Thyroid gland (tissue), 4 donors: ENCODE measurements at regions of chr17 and their contacts with region 1.

Region 1: DNA sequence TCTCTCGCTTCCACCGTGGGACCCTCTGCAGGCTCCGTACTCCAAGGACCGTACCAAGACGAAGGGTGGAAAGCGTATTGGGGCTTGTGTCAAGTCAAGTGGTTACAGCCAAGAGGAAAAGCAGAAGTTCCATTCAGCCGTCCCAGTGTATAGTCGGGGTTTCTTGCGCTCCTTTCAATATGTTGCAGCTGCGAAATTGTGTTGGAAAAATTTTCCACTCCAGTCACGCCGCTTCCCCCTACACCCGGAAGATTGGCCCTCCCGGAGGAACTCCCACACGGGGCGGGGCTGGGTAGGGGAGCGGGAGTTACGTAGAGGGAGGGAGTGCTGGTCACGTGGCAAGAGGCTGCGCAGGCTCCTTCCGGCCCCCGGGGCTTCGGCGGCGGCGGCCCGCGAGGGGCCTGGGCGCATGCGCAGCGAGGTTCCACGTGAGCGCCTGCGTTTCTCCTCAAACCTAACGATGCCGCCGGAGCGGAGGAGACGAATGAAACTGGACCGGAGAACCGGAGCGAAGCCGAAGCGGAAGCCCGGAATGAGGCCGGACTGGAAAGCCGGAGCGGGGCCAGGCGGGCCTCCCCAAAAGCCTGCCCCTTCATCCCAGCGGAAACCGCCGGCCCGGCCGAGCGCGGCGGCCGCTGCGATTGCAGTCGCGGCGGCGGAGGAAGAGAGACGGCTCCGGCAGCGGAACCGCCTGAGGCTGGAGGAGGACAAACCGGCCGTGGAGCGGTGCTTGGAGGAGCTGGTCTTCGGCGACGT is at the start of gene UTP18:
- DNase-seq: peak; percentile 96 to 97
- H3K4me3 ChIP-seq: peak within 1 kb of the TSS; percentile 55 to 93 (median 85)
- H3K27ac ChIP-seq: peak within 1 kb of the TSS; percentile 96 to 99 (median 99)
- H3K4me1 ChIP-seq: peaks cover 26 to 28% of the 10 kb centered on the region in 2 donors
- H3K27me3 ChIP-seq: no peaks in the 10 kb centered on the region
- CTCF ChIP-seq: peak in 2 of 6 experiments; percentile 12 to 18
- POLR2A ChIP-seq: peak in 1 of 2 donors; percentile 64
- total RNA-seq, gene UTP18: 35.6 to 43.5 (median 38.6) TPM

Region 2: DNA sequence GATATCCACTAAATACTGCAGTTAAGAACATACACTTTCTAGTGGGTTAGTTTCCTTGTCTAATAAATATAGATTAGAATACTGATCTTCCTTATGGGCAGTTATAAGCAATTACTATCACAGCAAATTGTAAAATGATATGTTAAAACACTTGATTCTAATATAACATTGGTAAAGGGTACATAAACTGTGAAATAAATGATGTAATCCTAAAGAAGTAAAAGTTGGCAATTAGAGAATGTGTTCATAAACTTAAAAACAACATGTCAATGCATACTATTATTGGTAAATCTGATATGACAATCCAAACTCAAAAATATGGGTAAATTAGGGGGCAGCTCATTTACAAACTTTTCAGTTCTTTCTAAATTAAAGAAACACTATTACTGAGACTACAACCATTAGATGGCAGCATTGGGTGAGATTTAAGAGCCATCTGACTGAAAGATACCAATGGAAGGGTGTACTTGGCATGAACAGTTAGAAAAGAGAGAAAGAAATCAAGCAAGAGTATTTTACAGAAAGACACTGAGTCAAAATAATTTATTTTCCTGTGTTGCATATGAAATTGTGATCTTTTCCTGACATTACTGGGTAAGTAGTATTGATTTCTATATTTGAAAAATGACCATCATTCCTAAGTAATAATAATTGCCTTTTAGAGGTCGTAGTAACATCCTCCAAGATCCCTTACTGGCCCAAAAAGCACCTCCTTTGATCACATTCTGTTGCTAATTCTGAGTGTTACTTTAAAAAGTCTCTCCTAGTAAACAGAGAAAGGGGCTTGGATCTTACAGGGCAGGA is 259.3 kb before region 1 on chr17:
- intact Hi-C with region 1: no loop called
- DNase-seq: no peak
- H3K4me3 ChIP-seq: no peak overlapping the region
- H3K27ac ChIP-seq: peak overlapping the region in 1 of 3 donors; percentile 24
- H3K4me1 ChIP-seq: peaks cover 6 to 13% of the 10 kb centered on the region in 2 donors
- H3K27me3 ChIP-seq: no peaks in the 10 kb centered on the region
- CTCF ChIP-seq: peak in 5 of 6 experiments; percentile 13 to 84 (median 50)
- POLR2A ChIP-seq: no peak

Region 3: GRCh38 chr17:51166197-51166986 is 93.9 kb before region 1 on chr17 and contains the start of gene NME2:
- intact Hi-C with region 1: loop called (anchors 5 kb)
- DNase-seq: peak; percentile 90 to 91
- H3K4me3 ChIP-seq: peak within 1 kb of the TSS; percentile 75 to 93 (median 87)
- H3K27ac ChIP-seq: peak within 1 kb of the TSS; percentile 82 to 94 (median 90)
- H3K4me1 ChIP-seq: peaks cover 14 to 15% of the 10 kb centered on the region in 2 donors
- H3K27me3 ChIP-seq: no peaks in the 10 kb centered on the region
- CTCF ChIP-seq: no peak
- POLR2A ChIP-seq: peak in 1 of 2 donors; percentile 80
- total RNA-seq, gene NME2: 202 to 486 (median 387) TPM